ENCODE measurements at regions of chr3 and their contacts with region 1.

Region 1: DNA sequence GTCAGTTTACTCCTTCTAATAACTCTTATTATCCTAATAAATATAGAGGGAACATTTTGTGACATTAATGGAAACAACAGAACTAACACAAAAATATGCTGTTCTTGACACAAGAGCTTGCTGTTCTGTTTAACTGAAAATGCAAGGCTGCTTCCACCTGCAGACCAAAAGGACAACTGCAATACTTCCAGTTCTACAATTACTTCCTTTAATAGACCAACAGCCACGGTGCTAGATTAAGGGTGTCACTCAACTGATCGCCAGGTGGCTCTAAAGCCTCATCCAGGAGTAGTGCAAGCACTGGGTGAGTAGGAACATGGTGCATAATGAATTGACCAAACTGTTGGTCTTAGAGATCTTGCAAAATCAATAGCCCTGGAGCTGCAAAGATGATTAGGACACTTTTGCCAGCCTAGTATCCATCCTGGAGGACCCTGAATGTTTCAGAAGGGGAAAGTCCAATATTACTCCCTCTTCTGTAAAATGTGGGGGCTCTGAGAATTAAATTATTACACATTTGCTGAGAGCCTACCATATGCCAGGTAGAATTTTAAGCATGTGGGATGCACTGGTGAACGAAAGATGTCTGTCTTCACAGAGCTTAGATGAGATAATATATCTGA is 3.6 kb upstream of the CLDN16 start:
- DNase-seq: peak; percentile 93
- H3K4me3 Mint-ChIP-seq: no peak overlapping the region
- H3K27ac Mint-ChIP-seq: peak overlapping the region; percentile 97
- H3K4me1 Mint-ChIP-seq: peaks cover 50% of the 10 kb centered on the region
- H3K27me3 Mint-ChIP-seq: no peaks in the 10 kb centered on the region
- CTCF ChIP-seq: peak; percentile 88

Region 2: DNA sequence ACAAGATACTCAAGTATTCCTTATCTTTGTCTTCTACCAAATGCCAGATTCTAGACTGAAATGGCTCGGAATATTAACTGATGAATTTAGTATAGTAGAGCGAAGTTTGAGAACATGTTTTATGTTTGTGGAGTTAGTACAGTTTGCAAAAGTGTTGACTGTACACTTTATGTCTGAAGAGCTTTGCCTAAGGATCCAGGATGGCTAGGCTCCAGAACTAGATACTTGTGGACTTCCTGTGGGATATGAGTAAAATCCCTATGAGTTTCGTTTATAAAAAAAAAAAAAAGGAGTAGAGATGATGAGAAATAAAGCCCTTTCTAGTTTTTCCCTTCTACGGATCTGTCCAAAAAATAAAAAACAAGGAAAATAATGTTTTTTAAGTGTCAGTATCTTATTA is 656.5 kb before region 1 on chr3:
- CTCF ChIA-PET with region 1: no interaction called
- POLR2A ChIA-PET with region 1: no interaction called
- intact Hi-C with region 1: no loop called
- DNase-seq: no peak
- H3K4me3 Mint-ChIP-seq: no peak overlapping the region
- H3K27ac Mint-ChIP-seq: no peak overlapping the region
- H3K4me1 Mint-ChIP-seq: peaks cover 7% of the 10 kb centered on the region
- H3K27me3 Mint-ChIP-seq: no peaks in the 10 kb centered on the region
- CTCF ChIP-seq: no peak

Region 3: DNA sequence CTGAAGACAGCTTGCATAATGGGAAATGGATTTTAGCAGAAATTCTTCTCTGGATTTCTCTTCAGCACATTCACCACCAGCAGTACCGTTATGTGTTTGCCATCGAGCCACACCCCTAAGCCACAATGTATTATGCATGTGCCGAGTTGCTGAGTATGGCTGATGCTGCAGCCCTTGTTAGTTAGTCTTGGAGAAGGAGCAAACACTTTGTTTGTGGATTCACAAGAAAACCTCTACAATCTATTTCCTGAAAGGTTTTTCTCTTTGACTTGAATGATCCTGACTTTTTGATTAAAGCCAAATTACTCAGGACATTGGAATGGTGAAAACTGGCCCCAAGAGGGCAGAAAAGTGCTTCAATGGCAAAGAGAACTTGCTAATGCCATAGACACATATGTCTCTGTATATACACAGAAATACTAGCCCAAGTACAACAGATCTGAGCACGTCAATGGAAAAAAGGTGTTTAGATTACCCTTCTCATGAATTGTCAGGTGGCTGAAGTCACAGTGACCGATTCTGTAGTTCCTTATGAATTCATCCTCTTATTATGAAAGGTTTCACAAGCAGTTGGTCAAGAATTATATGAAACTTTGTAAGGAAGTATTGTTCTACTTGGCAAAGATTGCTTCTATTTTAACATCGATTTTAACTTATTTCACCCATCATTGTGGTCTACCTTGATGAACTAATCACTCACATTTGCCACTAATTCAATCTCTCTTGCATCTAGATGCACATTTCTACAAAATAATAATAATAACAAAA is 366.6 kb before region 1 on chr3:
- CTCF ChIA-PET with region 1: interaction called, 5 read pairs
- POLR2A ChIA-PET with region 1: no interaction called
- intact Hi-C with region 1: loop called (anchors 5 kb)
- DNase-seq: peak; percentile 78
- H3K4me3 Mint-ChIP-seq: no peak overlapping the region
- H3K27ac Mint-ChIP-seq: no peak overlapping the region
- H3K4me1 Mint-ChIP-seq: peaks cover 26% of the 10 kb centered on the region
- H3K27me3 Mint-ChIP-seq: no peaks in the 10 kb centered on the region
- CTCF ChIP-seq: peak; percentile 74

Region 4: GRCh38 chr3:190175490-190175889 is 208.9 kb before region 1 on chr3:
- CTCF ChIA-PET with region 1: no interaction called
- POLR2A ChIA-PET with region 1: no interaction called
- intact Hi-C with region 1: no loop called
- DNase-seq: peak; percentile 35
- H3K4me3 Mint-ChIP-seq: no peak overlapping the region
- H3K27ac Mint-ChIP-seq: peak overlapping the region; percentile 78
- H3K4me1 Mint-ChIP-seq: peaks cover 7% of the 10 kb centered on the region
- H3K27me3 Mint-ChIP-seq: no peaks in the 10 kb centered on the region
- CTCF ChIP-seq: no peak

Region 5: GRCh38 chr3:190224863-190225692 is 159.3 kb before region 1 on chr3:
- CTCF ChIA-PET with region 1: interaction called, 90 read pairs
- POLR2A ChIA-PET with region 1: interaction called, 39 read pairs
- intact Hi-C with region 1: loop called (anchors 1 kb)
- DNase-seq: peak; percentile 57
- H3K4me3 Mint-ChIP-seq: no peak overlapping the region
- H3K27ac Mint-ChIP-seq: no peak overlapping the region
- H3K4me1 Mint-ChIP-seq: peaks cover 16% of the 10 kb centered on the region
- H3K27me3 Mint-ChIP-seq: no peaks in the 10 kb centered on the region
- CTCF ChIP-seq: peak; percentile 50

Region 6: DNA sequence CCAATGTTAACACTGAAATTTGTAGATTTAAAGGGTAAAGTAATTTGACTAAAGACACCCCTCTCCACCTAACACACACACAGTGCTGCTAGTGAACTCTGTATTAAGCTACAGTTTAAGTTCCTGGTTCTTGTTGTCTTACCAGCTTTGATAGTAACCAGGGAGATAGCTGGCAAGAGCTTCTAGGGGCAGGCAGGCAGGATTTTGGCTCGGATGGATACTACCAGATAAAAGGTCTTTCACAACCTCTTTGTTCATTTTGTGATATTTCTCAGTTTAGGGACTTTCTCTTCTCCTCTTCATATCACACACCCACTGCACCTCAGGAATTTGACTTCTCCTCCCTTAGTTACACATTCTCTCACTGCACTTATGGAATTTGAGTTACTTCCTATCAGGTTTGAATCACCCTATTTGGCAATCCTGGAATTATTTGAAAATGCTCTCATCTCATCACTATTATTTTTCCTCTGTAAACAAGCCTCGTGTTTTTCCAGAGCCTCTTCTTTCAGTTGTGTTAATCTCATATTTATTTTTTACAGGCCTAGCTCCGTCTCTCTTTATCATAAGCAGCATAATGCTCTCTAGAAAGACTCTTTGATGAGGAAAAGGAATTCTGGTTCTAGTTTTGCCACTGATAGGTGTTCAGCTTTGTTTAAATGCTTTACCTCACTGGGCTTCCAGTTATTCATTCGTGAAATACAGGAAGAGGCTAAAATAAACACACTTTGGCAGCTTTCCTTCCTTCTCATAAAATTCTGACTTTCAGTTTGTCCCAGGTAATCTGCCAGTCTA is 39.1 kb before region 1 on chr3:
- CTCF ChIA-PET with region 1: interaction called, 14 read pairs
- POLR2A ChIA-PET with region 1: interaction called, 132 read pairs
- intact Hi-C with region 1: loop called (anchors 1 kb)
- DNase-seq: peak; percentile 94
- H3K4me3 Mint-ChIP-seq: peak overlapping the region; percentile 58
- H3K27ac Mint-ChIP-seq: peak overlapping the region; percentile 99
- H3K4me1 Mint-ChIP-seq: peaks cover 40% of the 10 kb centered on the region
- H3K27me3 Mint-ChIP-seq: no peaks in the 10 kb centered on the region
- CTCF ChIP-seq: no peak

Region 7: DNA sequence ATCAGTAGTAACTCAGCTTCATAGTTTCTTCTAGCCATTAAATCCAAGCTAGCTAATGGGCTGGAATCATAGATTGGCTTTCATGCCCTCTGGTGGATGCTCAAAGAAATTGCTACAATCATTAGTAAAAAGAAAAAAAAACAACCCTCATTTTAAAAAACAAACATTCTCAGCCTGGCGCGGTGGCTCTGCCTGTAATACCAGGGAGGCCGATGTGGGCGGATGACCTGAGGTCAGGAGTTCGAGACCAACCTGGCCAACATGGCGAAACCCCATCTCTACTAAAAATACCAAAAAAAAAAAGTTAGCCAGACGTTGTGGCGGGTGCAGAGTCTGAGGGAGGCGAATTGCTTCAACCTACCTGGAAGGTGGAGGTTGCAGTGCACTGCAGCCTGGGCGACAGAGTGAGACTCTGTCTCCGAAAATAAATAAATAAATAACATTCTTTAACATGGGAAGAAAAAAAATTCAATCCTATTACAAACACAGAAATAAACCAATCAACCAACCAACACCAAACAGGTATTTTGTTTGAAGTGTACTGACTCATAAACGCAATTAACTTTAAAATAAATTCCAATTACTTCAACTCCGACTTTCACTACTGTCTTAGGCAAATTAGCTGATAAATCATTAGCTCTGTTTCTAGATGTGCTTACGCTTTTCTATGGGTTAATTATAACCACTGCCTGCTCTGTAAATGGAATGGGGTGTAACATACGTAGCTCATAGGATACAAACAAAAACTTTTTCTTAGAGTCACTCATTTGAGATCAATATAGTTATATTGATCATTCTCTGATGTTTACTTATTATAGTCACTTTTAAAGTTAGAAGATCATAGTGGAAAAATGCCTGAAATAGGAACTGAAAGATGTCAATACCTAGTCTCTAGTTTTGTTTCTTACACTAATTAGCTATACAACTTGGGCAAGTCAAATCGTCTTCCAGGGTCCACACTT is 40.4 kb after region 1 on chr3:
- CTCF ChIA-PET with region 1: interaction called, 21 read pairs
- POLR2A ChIA-PET with region 1: interaction called, 13 read pairs
- intact Hi-C with region 1: loop called (anchors 1 kb)
- DNase-seq: peak; percentile 83
- H3K4me3 Mint-ChIP-seq: no peak overlapping the region
- H3K27ac Mint-ChIP-seq: peak overlapping the region; percentile 71
- H3K4me1 Mint-ChIP-seq: no peaks in the 10 kb centered on the region
- H3K27me3 Mint-ChIP-seq: no peaks in the 10 kb centered on the region
- CTCF ChIP-seq: peak; percentile 64

Region 8: GRCh38 chr3:190456770-190457169 is 72.4 kb after region 1 on chr3:
- CTCF ChIA-PET with region 1: no interaction called
- POLR2A ChIA-PET with region 1: no interaction called
- intact Hi-C with region 1: no loop called
- DNase-seq: no peak
- H3K4me3 Mint-ChIP-seq: no peak overlapping the region
- H3K27ac Mint-ChIP-seq: no peak overlapping the region
- H3K4me1 Mint-ChIP-seq: no peaks in the 10 kb centered on the region
- H3K27me3 Mint-ChIP-seq: no peaks in the 10 kb centered on the region
- CTCF ChIP-seq: no peak

Region 9: GRCh38 chr3:190701096-190701532 is 316.8 kb after region 1 on chr3:
- CTCF ChIA-PET with region 1: interaction called, 50 read pairs
- POLR2A ChIA-PET with region 1: interaction called, 6 read pairs
- intact Hi-C with region 1: loop called (anchors 1 kb)
- DNase-seq: peak; percentile 86
- H3K4me3 Mint-ChIP-seq: no peak overlapping the region
- H3K27ac Mint-ChIP-seq: no peak overlapping the region
- H3K4me1 Mint-ChIP-seq: peaks cover 14% of the 10 kb centered on the region
- H3K27me3 Mint-ChIP-seq: no peaks in the 10 kb centered on the region
- CTCF ChIP-seq: peak; percentile 75